ENCODE measurements at regions of chr9 and their contacts with region 1.

Region 1: GRCh38 chr9:89000973-89001916 is 10.0 kb downstream of the S1PR3 start:
- DNase-seq: peak; percentile 81
- ATAC-seq: peak; percentile 85
- H3K4me3 ChIP-seq: no peak overlapping the region
- H3K27ac ChIP-seq: peak overlapping the region; percentile 30; the same call in 1 of the 2 replicates
- H3K4me1 ChIP-seq: peaks cover 16% of the 10 kb centered on the region
- H3K27me3 ChIP-seq: no peaks in the 10 kb centered on the region
- CTCF ChIP-seq: peak; percentile 91
- POLR2A ChIP-seq: peak; percentile 49; the same call in 1 of the 2 replicates
- RAD21 ChIP-seq: peak; percentile 93

Region 2: DNA sequence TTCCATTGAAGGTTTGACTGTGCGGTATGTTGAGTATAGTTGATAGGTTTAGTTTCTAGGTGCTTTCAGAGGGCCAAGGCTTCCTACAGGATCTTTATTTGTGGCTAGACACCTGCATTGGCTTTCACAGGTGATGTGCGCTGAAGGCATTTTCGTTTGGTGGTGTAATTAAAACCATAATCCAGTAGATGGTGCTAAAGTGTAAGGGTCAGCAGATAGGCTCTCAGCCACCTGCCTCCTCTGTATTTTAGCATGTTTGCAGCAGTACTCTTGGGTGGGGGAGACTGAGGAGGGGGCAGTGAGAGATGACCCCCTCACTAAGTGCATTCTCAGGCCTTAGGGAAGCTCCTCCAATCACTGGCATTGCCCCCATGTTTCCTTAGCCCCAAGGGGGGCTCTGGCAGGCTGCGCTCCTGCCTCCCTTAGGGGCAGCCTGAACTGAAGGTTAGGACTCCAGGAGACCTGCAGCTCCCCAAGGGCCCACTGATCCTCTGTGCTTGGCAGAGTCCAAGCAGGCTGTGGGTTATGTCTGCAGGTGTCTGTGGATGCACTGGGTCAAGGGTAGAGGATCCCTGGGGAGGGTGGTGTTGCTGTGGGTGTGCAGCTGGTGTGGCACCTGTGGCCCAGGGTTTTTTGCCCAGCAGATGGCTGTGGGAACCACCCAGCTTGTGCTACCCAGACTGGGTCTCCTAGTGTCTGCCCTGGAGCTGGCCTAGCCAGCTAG is 1050.3 kb before region 1 on chr9:
- CTCF ChIA-PET with region 1: no interaction called
- POLR2A ChIA-PET with region 1: no interaction called
- dilution Hi-C with region 1: no loop called
- in situ Hi-C with region 1: loop called (anchors 25 kb)
- intact Hi-C with region 1: no loop called
- DNase-seq: peak; percentile 34
- ATAC-seq: peak; percentile 77
- H3K4me3 ChIP-seq: no peak overlapping the region
- H3K27ac ChIP-seq: no peak overlapping the region
- H3K4me1 ChIP-seq: no peaks in the 10 kb centered on the region
- H3K27me3 ChIP-seq: peaks cover 5% of the 10 kb centered on the region
- CTCF ChIP-seq: peak; percentile 61
- POLR2A ChIP-seq: no peak
- RAD21 ChIP-seq: peak; percentile 82

Region 3: DNA sequence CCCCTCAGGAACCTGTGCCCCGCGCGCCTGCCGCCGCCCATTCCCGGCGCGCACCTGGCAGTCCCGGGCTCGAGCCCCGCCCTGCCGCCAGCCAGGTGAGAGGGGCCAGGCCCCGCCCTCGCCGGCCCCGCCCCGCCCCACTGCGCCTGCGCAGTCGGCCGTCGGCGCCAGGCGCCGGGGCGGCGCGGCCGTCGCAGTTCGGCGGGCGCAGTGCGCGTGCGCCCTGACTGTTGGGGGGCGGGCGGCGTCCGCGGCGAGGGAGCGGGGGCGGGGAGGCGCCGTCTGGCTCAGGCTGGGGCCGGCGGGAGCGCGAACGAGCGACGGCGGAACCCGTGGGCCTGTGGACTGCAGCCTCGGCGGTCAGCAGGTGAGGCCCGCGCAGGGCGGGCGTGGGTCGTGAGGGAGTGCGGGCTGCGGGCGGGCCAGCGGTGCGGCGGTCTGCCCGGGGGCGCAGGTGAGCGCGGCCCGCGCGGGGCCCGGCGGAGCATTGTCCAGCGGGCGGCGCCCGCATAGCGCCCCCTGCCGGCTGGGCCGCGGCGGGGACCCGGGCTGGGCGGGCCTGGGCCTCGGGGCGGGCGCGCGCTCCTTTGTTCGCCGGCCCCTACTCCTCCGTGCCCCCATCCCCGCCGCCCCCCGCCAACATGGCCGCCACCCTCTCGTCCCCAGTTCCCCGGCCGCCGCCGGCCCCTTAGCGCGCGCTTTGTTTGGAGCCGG is 612.9 kb before region 1 on chr9 and contains the start of gene SPIN1:
- CTCF ChIA-PET with region 1: no interaction called
- POLR2A ChIA-PET with region 1: no interaction called
- dilution Hi-C with region 1: no loop called
- in situ Hi-C with region 1: no loop called
- intact Hi-C with region 1: loop called (anchors 2 kb)
- DNase-seq: peak; percentile 62
- ATAC-seq: peak; percentile 90
- H3K4me3 ChIP-seq: peak within 1 kb of the TSS; percentile 84
- H3K27ac ChIP-seq: peak within 1 kb of the TSS; percentile 94
- H3K4me1 ChIP-seq: peaks cover 13% of the 10 kb centered on the region
- H3K27me3 ChIP-seq: no peaks in the 10 kb centered on the region
- CTCF ChIP-seq: peak; percentile 64
- POLR2A ChIP-seq: 0 out of 2 replicates have a peak, but pooled peaks have one; percentile 30
- RAD21 ChIP-seq: peak; percentile 44
- total RNA-seq, gene SPIN1: 141 and 189 TPM in 2 replicates

Region 4: GRCh38 chr9:88660611-88661010 is 340.6 kb before region 1 on chr9:
- CTCF ChIA-PET with region 1: interaction called, 3 read pairs
- POLR2A ChIA-PET with region 1: no interaction called
- dilution Hi-C with region 1: no loop called
- in situ Hi-C with region 1: no loop called
- intact Hi-C with region 1: loop called (anchors 1 kb)
- DNase-seq: peak; percentile 43
- ATAC-seq: peak; percentile 71
- H3K4me3 ChIP-seq: no peak overlapping the region
- H3K27ac ChIP-seq: no peak overlapping the region
- H3K4me1 ChIP-seq: peaks cover 7% of the 10 kb centered on the region
- H3K27me3 ChIP-seq: no peaks in the 10 kb centered on the region; the same call in 1 of the 2 replicates
- CTCF ChIP-seq: peak; percentile 53
- POLR2A ChIP-seq: no peak
- RAD21 ChIP-seq: peak; percentile 68

Region 5: GRCh38 chr9:88915932-88916331 is 85.3 kb before region 1 on chr9:
- CTCF ChIA-PET with region 1: no interaction called
- POLR2A ChIA-PET with region 1: no interaction called
- dilution Hi-C with region 1: no loop called
- in situ Hi-C with region 1: no loop called
- intact Hi-C with region 1: no loop called
- DNase-seq: no peak
- ATAC-seq: no peak
- H3K4me3 ChIP-seq: no peak overlapping the region
- H3K27ac ChIP-seq: no peak overlapping the region
- H3K4me1 ChIP-seq: no peaks in the 10 kb centered on the region
- H3K27me3 ChIP-seq: peaks cover 9% of the 10 kb centered on the region; the same call in 1 of the 2 replicates
- CTCF ChIP-seq: no peak
- POLR2A ChIP-seq: no peak
- RAD21 ChIP-seq: no peak

Region 6: GRCh38 chr9:89185980-89186379 is 184.7 kb after region 1 on chr9:
- CTCF ChIA-PET with region 1: no interaction called
- POLR2A ChIA-PET with region 1: no interaction called
- dilution Hi-C with region 1: no loop called
- in situ Hi-C with region 1: no loop called
- intact Hi-C with region 1: no loop called
- DNase-seq: peak; percentile 29
- ATAC-seq: peak; percentile 68; the same call in 1 of the 2 replicates
- H3K4me3 ChIP-seq: no peak overlapping the region
- H3K27ac ChIP-seq: no peak overlapping the region
- H3K4me1 ChIP-seq: no peaks in the 10 kb centered on the region
- H3K27me3 ChIP-seq: no peaks in the 10 kb centered on the region; the same call in 1 of the 2 replicates
- CTCF ChIP-seq: no peak
- POLR2A ChIP-seq: no peak
- RAD21 ChIP-seq: no peak

Measured in IMR-90 (cell line).